Tibial artery (tissue), 4 donors: ENCODE measurements at regions of chr2 and their contacts with region 1.

Region 1: GRCh38 chr2:30714811-30715709 is 92.2 kb downstream of the CAPN13 start:
- DNase-seq: peak in 1 of 2 donors; percentile 23
- H3K4me3 ChIP-seq: no peak overlapping the region
- H3K27ac ChIP-seq: no peak overlapping the region
- H3K4me1 ChIP-seq: peaks cover 0 to 4% (median under 1%) of the 10 kb centered on the region in 4 donors
- H3K27me3 ChIP-seq: no peaks in the 10 kb centered on the region
- CTCF ChIP-seq: no peak

Region 2: GRCh38 chr2:30653847-30654246 is 61.2 kb before region 1 on chr2:
- intact Hi-C with region 1: no loop called
- DNase-seq: peak; percentile 46 to 74
- H3K4me3 ChIP-seq: no peak overlapping the region
- H3K27ac ChIP-seq: no peak overlapping the region
- H3K4me1 ChIP-seq: peaks cover 0 to 3% (median 0%) of the 10 kb centered on the region in 4 donors
- H3K27me3 ChIP-seq: no peaks in the 10 kb centered on the region
- CTCF ChIP-seq: no peak

Region 3: DNA sequence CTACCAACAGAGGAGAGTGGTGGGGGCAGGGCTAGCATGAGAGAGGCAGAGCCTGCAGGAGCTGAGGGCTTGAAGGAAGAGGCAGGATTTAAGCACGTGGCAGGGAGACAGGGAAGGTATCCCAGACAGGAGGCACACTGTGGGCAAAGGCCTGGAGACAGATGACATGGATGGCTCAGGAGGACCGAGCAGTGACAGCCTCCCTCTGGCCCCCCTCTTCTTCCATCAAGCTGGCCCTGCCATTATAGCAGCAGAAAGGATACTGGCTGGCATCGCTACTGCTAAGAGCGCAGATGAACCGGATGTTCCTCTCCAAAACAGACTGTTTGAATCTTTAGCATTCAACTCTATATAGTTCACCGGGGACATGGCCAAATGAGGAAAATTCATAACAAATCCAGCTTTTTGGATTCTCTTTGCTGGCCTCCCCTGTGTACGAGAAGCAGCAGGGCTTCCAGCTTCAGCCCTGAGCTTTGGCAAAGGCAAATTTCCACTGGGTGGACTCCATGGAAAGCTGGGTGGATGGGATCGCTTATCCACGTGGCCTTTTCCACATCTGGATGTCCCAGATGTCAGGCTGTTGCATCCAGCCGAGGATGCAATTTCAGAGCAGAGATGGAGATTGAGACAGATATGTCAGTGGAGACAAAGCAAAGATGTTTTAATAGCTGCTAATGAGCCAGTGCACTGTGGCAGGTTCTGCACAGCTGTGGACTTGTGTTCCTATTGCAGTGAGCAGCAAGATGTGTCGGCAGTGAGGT is 55.9 kb after region 1 on chr2:
- intact Hi-C with region 1: no loop called
- DNase-seq: no peak
- H3K4me3 ChIP-seq: no peak overlapping the region
- H3K27ac ChIP-seq: no peak overlapping the region
- H3K4me1 ChIP-seq: no peaks in the 10 kb centered on the region
- H3K27me3 ChIP-seq: peaks cover 0 to 22% of the 10 kb centered on the region in 2 donors
- CTCF ChIP-seq: no peak

Region 4: DNA sequence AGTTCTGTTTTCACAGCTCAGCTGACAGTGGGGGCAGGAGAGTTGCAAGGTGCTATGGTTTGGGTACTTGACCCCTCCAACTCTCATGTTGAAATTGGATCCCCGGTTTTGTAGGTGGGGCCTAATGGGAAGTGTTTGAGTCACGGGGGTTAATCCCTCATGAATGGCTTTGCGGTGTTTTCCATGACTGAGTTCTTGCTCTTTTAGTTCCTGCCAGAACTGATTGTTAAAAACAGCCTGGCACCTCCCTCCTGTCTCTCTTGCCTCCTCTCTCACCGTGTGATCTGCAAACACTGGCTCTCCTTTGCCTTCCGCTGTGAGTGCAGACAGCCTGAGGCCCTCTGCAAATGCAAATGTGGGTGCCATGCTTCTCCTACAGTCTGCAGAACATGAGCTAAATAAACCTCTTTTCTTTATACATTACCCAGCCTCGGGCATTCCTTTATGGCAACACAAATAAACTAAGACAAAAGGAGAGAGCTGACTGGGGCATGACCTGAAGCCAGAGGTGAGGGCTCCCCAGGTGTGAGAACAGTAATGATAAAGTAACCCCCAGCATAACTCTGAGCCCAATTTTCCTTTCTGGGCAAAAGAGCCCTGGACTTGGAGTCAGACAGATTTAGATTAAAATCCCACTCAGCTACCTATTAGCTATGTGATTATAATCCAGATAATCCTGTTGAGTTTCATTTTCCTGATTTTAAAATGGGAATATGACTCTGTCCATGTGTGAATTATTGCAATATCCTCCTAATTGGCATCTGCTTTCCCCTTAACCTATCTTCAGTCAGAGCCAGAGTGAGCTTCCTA is 157.1 kb after region 1 on chr2:
- intact Hi-C with region 1: no loop called
- DNase-seq: no peak
- H3K4me3 ChIP-seq: no peak overlapping the region
- H3K27ac ChIP-seq: no peak overlapping the region
- H3K4me1 ChIP-seq: no peaks in the 10 kb centered on the region
- H3K27me3 ChIP-seq: peaks cover 0 to 7% of the 10 kb centered on the region in 2 donors
- CTCF ChIP-seq: no peak

Region 5: DNA sequence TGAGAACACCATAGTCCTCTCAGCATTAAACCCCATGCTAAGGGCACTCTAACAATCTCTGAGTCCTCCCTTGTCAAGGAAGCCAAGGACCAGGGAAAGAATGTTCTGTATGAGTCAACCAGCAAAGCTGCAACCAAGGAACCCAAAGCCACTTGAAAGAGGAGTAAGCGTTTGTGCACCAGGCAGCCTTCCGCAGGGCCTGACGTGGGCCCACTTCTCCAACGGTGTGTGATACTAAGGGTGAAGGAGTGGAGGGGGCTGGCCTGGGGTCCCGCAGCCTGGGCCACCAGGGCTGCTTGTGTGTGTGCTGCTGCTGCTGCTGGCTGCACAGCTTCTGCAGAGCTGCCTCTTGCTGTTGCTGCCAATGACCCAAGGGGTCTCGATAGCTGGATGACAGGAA is 453.2 kb after region 1 on chr2:
- intact Hi-C with region 1: loop called (anchors 2 kb)
- DNase-seq: no peak
- H3K4me3 ChIP-seq: no peak overlapping the region
- H3K27ac ChIP-seq: no peak overlapping the region
- H3K4me1 ChIP-seq: no peaks in the 10 kb centered on the region
- H3K27me3 ChIP-seq: no peaks in the 10 kb centered on the region
- CTCF ChIP-seq: no peak

Region 6: GRCh38 chr2:31523871-31524492 is 808.9 kb after region 1 on chr2:
- intact Hi-C with region 1: loop called (anchors 2 kb)
- DNase-seq: peak in 1 of 2 donors; percentile 52
- H3K4me3 ChIP-seq: no peak overlapping the region
- H3K27ac ChIP-seq: no peak overlapping the region
- H3K4me1 ChIP-seq: no peaks in the 10 kb centered on the region
- H3K27me3 ChIP-seq: peaks cover 0 to 4% of the 10 kb centered on the region in 2 donors
- CTCF ChIP-seq: peak; percentile 37 to 51